Vagina (tissue), 2 donors: ENCODE measurements at regions of chr5 and their contacts with region 1.

Region 1: GRCh38 chr5:18216016-18216415 is 581.8 kb downstream of the TAF11L14 start:
- DNase-seq: no peak
- H3K4me3 ChIP-seq: no peak overlapping the region
- H3K27ac ChIP-seq: no peak overlapping the region
- H3K4me1 ChIP-seq: no peaks in the 10 kb centered on the region
- H3K27me3 ChIP-seq: no peaks in the 10 kb centered on the region
- CTCF ChIP-seq: no peak
- POLR2A ChIP-seq: no peak

Region 2: DNA sequence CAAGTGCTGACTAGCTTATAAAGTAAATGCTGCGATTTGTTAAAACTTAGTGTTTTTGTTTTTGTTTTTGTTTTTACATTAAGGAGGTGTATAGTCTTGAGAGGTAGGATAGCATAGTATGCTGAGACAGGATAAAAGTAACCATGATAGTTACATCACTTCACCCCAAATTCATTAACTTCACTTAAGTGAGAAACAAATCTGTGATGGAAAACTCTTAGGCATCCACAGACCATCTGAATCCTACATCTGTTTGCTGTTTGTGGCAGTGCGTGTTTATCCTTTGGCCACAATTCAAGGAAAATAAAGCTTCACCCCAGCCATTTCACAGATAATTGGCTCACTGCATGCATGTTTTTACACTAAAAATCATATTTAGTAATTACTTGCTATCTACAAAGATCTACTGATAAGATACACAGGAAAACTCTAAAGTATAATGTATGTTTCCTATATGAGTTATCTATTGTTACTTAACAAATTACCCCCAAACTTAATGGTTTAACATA is 1832.4 kb before region 1 on chr5:
- intact Hi-C with region 1: loop called (anchors 10 kb)
- DNase-seq: no peak
- H3K4me3 ChIP-seq: no peak overlapping the region
- H3K27ac ChIP-seq: no peak overlapping the region
- H3K4me1 ChIP-seq: no peaks in the 10 kb centered on the region
- H3K27me3 ChIP-seq: no peaks in the 10 kb centered on the region
- CTCF ChIP-seq: no peak
- POLR2A ChIP-seq: no peak

Region 3: GRCh38 chr5:18333841-18334240 is 117.8 kb after region 1 on chr5:
- intact Hi-C with region 1: no loop called
- DNase-seq: no peak
- H3K4me3 ChIP-seq: no peak overlapping the region
- H3K27ac ChIP-seq: no peak overlapping the region
- H3K4me1 ChIP-seq: no peaks in the 10 kb centered on the region
- H3K27me3 ChIP-seq: no peaks in the 10 kb centered on the region
- CTCF ChIP-seq: no peak
- POLR2A ChIP-seq: no peak